ENCODE measurements at regions of chr19 and their contacts with region 1.

Region 1: DNA sequence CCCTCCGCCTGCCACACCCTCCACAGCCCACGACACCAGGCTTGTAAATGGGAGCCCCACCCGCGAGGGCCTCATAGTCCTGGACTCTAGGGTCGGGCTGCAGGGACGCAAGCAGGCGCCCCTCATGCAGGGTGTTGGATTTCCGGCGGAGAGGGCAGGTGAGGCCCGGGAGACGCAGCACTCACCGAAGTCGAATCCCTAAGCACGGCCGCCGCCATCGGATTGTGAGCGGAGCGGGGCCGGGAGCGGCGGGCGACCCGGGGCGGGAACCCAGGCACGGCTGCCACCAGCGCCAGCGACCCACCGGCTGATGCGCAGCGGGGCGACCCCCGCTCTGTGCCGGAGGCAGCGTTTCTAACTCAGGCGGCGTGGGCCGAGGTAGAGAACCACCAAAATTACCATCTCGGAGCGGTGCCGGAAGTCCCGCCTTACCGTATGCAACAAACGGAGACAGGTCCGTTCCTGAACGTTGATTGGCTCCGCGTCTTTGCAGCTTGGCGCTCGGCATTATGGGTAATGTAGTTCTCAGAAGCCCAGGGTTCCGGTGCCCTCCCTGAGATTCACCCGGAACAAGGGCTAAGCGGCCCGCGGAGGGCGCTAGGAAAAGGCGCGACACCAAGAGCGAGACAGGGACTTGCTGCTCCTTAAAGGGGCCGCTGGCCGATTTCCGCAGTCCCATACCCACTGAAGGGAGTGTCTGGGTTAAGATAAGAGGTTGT is at the start of gene ZNF416:
- DNase-seq: peak; percentile 98
- H3K4me3 Mint-ChIP-seq: peak within 1 kb of the TSS; percentile 84
- H3K27ac Mint-ChIP-seq: peak within 1 kb of the TSS; percentile 73
- H3K4me1 Mint-ChIP-seq: peaks cover 19% of the 10 kb centered on the region
- H3K27me3 Mint-ChIP-seq: no peaks in the 10 kb centered on the region
- total RNA-seq, gene ZNF416: 3.4 and 3.5 TPM in 2 replicates

Region 2: GRCh38 chr19:57527136-57527881 is 51.3 kb before region 1 on chr19 and contains the start of gene ZNF549:
- intact Hi-C with region 1: loop called (anchors 1 kb)
- DNase-seq: peak; percentile 96
- H3K4me3 Mint-ChIP-seq: peak within 1 kb of the TSS; percentile 99
- H3K27ac Mint-ChIP-seq: peak within 1 kb of the TSS; percentile 57
- H3K4me1 Mint-ChIP-seq: peaks cover 14% of the 10 kb centered on the region
- H3K27me3 Mint-ChIP-seq: no peaks in the 10 kb centered on the region
- total RNA-seq, gene ZNF549: 4.0 and 4.9 TPM in 2 replicates

Region 3: DNA sequence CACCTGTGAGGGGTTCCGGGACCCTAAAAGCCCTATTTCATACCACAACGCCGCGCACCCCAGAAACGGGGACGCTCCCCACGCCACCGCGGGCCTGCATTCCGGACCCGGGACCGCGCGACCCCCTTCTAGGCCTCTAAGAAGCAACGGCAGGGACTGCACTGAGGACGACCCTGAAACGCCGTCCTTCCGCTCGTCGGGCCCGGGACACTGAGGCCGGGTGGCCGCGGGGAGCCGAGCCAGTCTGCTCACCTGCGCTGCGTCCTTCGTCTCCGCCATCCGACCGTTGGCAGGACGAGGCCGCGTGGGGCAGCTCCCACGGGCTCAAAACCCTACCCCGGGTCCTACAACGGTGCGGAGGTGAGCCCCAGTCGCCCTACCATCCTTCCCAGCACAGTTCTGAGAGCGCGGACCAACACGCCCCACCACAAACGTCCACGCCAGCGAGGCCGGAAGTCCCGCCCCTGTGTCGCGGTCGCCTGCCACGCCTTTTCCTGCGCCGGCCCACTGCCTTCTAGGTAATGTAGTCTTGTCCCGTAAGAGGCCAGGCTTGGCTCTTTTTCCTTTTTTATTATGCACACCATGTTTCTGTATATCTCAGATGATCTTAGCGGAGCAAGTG is 19.1 kb before region 1 on chr19 and contains the start of gene ZNF550:
- intact Hi-C with region 1: loop called (anchors 1 kb)
- DNase-seq: peak; percentile 96
- H3K4me3 Mint-ChIP-seq: peak within 1 kb of the TSS; percentile 99
- H3K27ac Mint-ChIP-seq: peak within 1 kb of the TSS; percentile 94
- H3K4me1 Mint-ChIP-seq: peaks cover 23% of the 10 kb centered on the region
- H3K27me3 Mint-ChIP-seq: no peaks in the 10 kb centered on the region
- total RNA-seq, gene ZNF550: 7.4 and 9.3 TPM in 2 replicates

Region 4: GRCh38 chr19:57599761-57600383 is 21.2 kb after region 1 on chr19 and contains the start of gene ZNF530:
- intact Hi-C with region 1: loop called (anchors 1 kb)
- DNase-seq: peak; percentile 95
- H3K4me3 Mint-ChIP-seq: peak within 1 kb of the TSS; percentile 85
- H3K27ac Mint-ChIP-seq: peak within 1 kb of the TSS; percentile 74
- H3K4me1 Mint-ChIP-seq: peaks cover 14% of the 10 kb centered on the region
- H3K27me3 Mint-ChIP-seq: no peaks in the 10 kb centered on the region
- total RNA-seq, gene ZNF530: 4.5 and 5.7 TPM in 2 replicates

Region 5: DNA sequence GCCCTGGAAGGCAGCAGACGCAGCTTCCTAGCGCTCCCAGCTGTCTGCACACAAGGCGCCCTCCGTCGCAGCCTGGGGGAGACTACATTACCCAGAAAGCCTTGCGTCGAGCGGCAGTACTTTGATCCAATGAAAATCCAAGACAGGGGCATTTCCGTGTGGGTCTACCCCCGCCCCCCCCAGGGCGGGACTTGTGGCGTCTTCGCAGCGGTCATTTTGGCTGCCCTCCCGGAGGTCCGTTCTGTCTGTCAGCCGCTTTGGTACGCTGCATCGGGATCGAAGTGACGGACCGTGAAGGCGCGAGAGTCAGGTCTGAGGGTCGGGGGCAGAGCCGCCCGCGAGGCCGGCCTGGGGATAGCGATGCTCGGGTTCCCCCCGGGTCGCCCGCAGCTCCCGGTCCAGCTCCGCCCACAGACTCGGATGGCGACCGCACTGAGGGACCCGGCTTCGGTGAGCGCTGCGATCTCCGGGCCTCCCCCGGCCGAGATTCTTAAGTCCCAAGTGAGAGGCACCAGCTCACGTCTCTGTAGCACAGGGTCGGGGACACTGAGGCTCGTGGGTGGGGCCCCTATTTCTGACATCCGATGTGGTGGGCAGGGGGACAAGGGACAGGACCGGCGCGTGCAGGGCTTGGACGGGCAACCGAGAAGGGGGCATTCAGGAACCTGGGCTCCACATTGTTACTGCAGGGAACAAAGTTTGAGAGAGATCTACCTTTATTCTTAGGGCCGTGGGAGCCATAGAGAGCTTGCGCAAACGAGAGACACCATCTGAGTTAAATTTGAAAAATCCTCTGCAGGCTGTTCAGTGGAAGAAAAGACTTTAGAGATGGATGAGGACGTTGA is 54.6 kb after region 1 on chr19 and contains the start of gene ZNF211:
- intact Hi-C with region 1: loop called (anchors 1 kb)
- DNase-seq: peak; percentile 95
- H3K4me3 Mint-ChIP-seq: peak within 1 kb of the TSS; percentile 87
- H3K27ac Mint-ChIP-seq: peak within 1 kb of the TSS; percentile 87
- H3K4me1 Mint-ChIP-seq: peaks cover 14% of the 10 kb centered on the region
- H3K27me3 Mint-ChIP-seq: no peaks in the 10 kb centered on the region
- total RNA-seq, gene ZNF211: 7.7 and 10.0 TPM in 2 replicates

Measured in activated CD4-positive, alpha-beta T cell treated with anti-CD3 and anti-CD28 coated beads, Interleukin-2, amount 10 ng/mL, durations not matched to agents 24 days and 14 days (primary cell).